SK-N-SH (cell line): ENCODE measurements at regions of chr10 and their contacts with region 1.

Region 1: DNA sequence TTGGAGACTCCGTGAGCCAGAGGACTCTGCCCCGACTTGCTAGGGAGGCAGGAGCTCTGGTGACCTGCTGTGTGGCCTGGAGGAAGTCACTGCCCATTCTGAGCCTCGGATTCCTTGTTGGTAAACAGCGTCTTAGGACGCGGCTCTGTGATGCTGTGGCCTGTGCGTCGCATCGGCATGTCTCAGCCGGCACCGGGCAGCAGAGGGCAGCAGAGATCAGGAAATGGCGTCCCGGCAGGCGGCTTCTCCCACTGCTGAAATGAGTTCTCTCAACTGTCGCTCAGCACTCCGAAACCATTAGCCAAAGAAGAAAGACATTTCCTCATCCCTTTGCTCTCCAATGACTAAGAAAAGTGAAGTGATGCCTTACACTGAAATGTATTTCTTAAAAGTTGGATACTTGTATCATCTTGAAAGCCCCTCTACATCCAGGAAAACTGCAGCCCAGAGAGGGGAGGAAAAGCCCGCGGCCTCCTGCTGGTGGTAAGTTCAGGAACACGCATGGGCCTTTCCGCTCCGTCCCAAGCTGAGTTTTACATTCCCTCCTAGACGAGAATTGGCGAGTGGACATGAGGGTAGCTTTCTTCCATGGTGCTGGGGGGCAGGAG is 91.7 kb downstream of the WDR11 start:
- DNase-seq: peak; percentile 86
- H3K4me3 ChIP-seq: peak overlapping the region in 1 of 2 experiments; percentile 31; a peak in 1 of 4 replicates
- H3K27ac ChIP-seq: no peak overlapping the region
- H3K4me1 ChIP-seq: peaks cover 0 to 3% of the 10 kb centered on the region in 2 experiments; a peak in 1 of 4 replicates
- H3K27me3 ChIP-seq: no peaks in the 10 kb centered on the region
- CTCF ChIP-seq: peak; percentile 87
- EP300 ChIP-seq: no peak
- RAD21 ChIP-seq: peak; percentile 95

Region 2: GRCh38 chr10:120931423-120931822 is 11.5 kb before region 1 on chr10:
- CTCF ChIA-PET with region 1: interaction called, 13 read pairs
- POLR2A ChIA-PET with region 1: no interaction called
- DNase-seq: peak; percentile 61
- H3K4me3 ChIP-seq: no peak overlapping the region
- H3K27ac ChIP-seq: no peak overlapping the region
- H3K4me1 ChIP-seq: peaks cover 0 to 13% of the 10 kb centered on the region in 2 experiments; a peak in 1 of 4 replicates
- H3K27me3 ChIP-seq: no peaks in the 10 kb centered on the region
- CTCF ChIP-seq: no peak
- EP300 ChIP-seq: no peak
- RAD21 ChIP-seq: no peak

Region 3: GRCh38 chr10:121741248-121741792 is 798.4 kb after region 1 on chr10:
- CTCF ChIA-PET with region 1: interaction called, 15 read pairs
- POLR2A ChIA-PET with region 1: no interaction called
- DNase-seq: no peak
- H3K4me3 ChIP-seq: no peak overlapping the region
- H3K27ac ChIP-seq: no peak overlapping the region; a peak in 1 of 4 replicates
- H3K4me1 ChIP-seq: peaks cover 5 to 22% of the 10 kb centered on the region in 2 experiments; a peak in 2 of 4 replicates
- H3K27me3 ChIP-seq: no peaks in the 10 kb centered on the region
- CTCF ChIP-seq: no peak
- EP300 ChIP-seq: no peak
- RAD21 ChIP-seq: no peak

Region 4: GRCh38 chr10:121886997-121887622 is 944.2 kb after region 1 on chr10:
- CTCF ChIA-PET with region 1: interaction called, 50 read pairs
- POLR2A ChIA-PET with region 1: no interaction called
- DNase-seq: peak; percentile 69
- H3K4me3 ChIP-seq: no peak overlapping the region; a peak in 1 of 4 replicates
- H3K27ac ChIP-seq: no peak overlapping the region
- H3K4me1 ChIP-seq: peaks cover 0 to 3% of the 10 kb centered on the region in 2 experiments; a peak in 1 of 4 replicates
- H3K27me3 ChIP-seq: no peaks in the 10 kb centered on the region
- CTCF ChIP-seq: peak; percentile 70
- EP300 ChIP-seq: no peak
- RAD21 ChIP-seq: peak; percentile 75